ENCODE measurements at regions of chr20 and their contacts with region 1.

Region 1: DNA sequence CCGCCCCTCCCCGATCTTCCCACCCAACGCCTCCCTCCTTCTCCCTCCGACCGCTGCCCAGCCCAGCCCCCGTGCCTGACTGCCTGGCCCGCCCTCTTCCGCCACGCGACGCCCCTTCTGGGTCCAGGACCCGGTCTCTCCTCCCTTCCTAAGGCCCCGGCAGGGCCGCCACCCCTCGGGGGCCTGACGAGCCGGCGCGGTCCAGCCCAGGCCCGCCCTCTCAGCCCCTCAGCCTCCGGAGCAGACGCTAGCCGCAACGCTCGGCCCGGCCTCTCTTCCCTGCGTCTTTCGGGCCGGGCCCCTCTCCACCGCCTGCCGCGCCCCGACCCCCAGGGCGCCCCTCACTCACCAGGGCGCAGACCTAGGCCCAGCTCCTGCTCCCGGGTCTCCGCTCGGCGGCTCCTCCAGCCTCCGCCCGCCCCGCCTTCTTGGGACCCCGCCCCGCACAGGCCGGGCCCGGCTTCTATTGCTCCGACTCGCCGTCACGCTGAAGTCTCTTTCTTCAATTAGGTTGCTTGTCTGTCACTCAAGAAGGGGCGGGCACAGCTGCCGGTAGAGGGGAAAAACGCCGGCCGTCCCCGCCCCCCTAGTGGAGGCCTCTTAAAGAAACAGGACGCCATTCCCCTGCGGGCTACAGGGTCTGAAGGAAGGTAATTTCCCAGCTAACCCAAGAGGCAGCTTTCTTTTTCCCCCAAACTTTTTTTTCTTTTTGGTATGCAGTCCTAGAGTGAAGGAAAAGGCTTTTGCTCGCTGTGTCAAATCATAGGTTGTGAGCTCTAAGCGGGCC is at the start of gene ELMO2:
- DNase-seq: peak; percentile 99
- ATAC-seq: peak; percentile 95
- total RNA-seq, gene ELMO2: 38.7 TPM

Region 2: GRCh38 chr20:46363800-46364634 is 42.4 kb before region 1 on chr20:
- intact Hi-C with region 1: loop called (anchors 1 kb)
- DNase-seq: peak; percentile 93
- ATAC-seq: peak; percentile 95